ENCODE measurements at regions of chr10 and their contacts with region 1.

Region 1: GRCh38 chr10:48506147-48506917 is 98.5 kb downstream of the ARHGAP22 start:
- DNase-seq: peak; percentile 68
- ATAC-seq: peak; percentile 96
- H3K4me3 ChIP-seq: no peak overlapping the region
- H3K27ac ChIP-seq: no peak overlapping the region
- H3K4me1 ChIP-seq: peaks cover 5 to 15% of the 10 kb centered on the region in 2 experiments; a peak in 3 of 4 replicates
- H3K27me3 ChIP-seq: no peaks in the 10 kb centered on the region
- CTCF ChIP-seq: peak; percentile 68 to 98 (median 70)
- POLR2A ChIP-seq: no peak
- RAD21 ChIP-seq: peak; percentile 85

Region 2: GRCh38 chr10:48377751-48378535 is 128.4 kb before region 1 on chr10:
- CTCF ChIA-PET with region 1: no interaction called
- POLR2A ChIA-PET with region 1: no interaction called
- RAD21 ChIA-PET with region 1: no interaction called
- intact Hi-C with region 1: no loop called
- DNase-seq: no peak
- ATAC-seq: no peak
- H3K4me3 ChIP-seq: no peak overlapping the region
- H3K27ac ChIP-seq: no peak overlapping the region
- H3K4me1 ChIP-seq: no peaks in the 10 kb centered on the region
- H3K27me3 ChIP-seq: no peaks in the 10 kb centered on the region
- CTCF ChIP-seq: no peak
- POLR2A ChIP-seq: no peak
- RAD21 ChIP-seq: no peak

Region 3: GRCh38 chr10:48444266-48444665 is 62.1 kb before region 1 on chr10:
- CTCF ChIA-PET with region 1: interaction called, 17 read pairs
- POLR2A ChIA-PET with region 1: no interaction called
- RAD21 ChIA-PET with region 1: no interaction called
- intact Hi-C with region 1: no loop called
- DNase-seq: peak; percentile 12
- ATAC-seq: peak; percentile 65
- H3K4me3 ChIP-seq: no peak overlapping the region
- H3K27ac ChIP-seq: no peak overlapping the region
- H3K4me1 ChIP-seq: no peaks in the 10 kb centered on the region; a peak in 1 of 4 replicates
- H3K27me3 ChIP-seq: no peaks in the 10 kb centered on the region
- CTCF ChIP-seq: peak; percentile 16 to 39 (median 32); a peak in 4 of 6 replicates
- POLR2A ChIP-seq: no peak
- RAD21 ChIP-seq: peak; percentile 51

Region 4: GRCh38 chr10:49009199-49009979 is 503.1 kb after region 1 on chr10:
- CTCF ChIA-PET with region 1: no interaction called
- POLR2A ChIA-PET with region 1: no interaction called
- RAD21 ChIA-PET with region 1: no interaction called
- intact Hi-C with region 1: no loop called
- DNase-seq: no peak
- ATAC-seq: no peak
- H3K4me3 ChIP-seq: no peak overlapping the region
- H3K27ac ChIP-seq: no peak overlapping the region
- H3K4me1 ChIP-seq: no peaks in the 10 kb centered on the region
- H3K27me3 ChIP-seq: peaks cover 14% of the 10 kb centered on the region
- CTCF ChIP-seq: no peak
- POLR2A ChIP-seq: no peak
- RAD21 ChIP-seq: no peak

Region 5: DNA sequence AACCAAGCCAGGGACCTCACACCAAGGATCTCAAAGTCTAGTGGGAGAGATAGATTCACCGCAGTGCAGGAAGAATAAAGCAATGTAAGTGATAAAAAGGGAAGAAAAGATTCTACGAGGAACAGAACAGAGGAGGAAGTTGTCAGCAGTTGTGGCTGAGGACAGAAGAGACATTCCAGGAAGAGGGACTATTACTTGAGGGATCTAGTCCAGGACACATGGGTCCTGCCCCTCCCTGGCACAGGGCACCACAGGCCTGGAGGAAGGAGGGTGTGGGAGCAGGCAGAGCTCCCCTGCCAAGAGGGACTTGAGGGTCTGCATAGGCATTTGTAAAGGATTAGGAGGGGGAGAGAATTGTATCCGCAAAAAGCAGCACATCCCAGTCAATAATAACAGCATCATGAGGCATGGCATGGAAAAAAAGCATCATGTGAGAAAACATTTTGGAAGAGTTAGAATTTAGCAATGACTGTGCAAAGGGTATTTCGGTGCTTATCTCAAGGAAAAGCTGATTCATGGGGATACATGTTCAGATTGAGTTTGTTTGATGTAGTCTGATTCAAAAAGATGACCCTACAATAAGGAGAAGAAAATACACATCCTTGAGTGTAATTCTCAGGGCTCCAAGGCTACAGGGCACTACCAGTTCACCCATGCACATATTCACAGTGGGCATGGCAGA is 805.4 kb after region 1 on chr10:
- CTCF ChIA-PET with region 1: no interaction called
- POLR2A ChIA-PET with region 1: no interaction called
- RAD21 ChIA-PET with region 1: no interaction called
- intact Hi-C with region 1: no loop called
- DNase-seq: no peak
- ATAC-seq: no peak
- H3K4me3 ChIP-seq: no peak overlapping the region
- H3K27ac ChIP-seq: no peak overlapping the region
- H3K4me1 ChIP-seq: no peaks in the 10 kb centered on the region
- H3K27me3 ChIP-seq: peaks cover 28% of the 10 kb centered on the region; the same call in 1 of the 2 replicates
- CTCF ChIP-seq: no peak
- POLR2A ChIP-seq: no peak
- RAD21 ChIP-seq: no peak

Measured in HCT116 (cell line).